OCI-LY7 (cell line): ENCODE measurements at regions of chr4 and their contacts with region 1.

Region 1: DNA sequence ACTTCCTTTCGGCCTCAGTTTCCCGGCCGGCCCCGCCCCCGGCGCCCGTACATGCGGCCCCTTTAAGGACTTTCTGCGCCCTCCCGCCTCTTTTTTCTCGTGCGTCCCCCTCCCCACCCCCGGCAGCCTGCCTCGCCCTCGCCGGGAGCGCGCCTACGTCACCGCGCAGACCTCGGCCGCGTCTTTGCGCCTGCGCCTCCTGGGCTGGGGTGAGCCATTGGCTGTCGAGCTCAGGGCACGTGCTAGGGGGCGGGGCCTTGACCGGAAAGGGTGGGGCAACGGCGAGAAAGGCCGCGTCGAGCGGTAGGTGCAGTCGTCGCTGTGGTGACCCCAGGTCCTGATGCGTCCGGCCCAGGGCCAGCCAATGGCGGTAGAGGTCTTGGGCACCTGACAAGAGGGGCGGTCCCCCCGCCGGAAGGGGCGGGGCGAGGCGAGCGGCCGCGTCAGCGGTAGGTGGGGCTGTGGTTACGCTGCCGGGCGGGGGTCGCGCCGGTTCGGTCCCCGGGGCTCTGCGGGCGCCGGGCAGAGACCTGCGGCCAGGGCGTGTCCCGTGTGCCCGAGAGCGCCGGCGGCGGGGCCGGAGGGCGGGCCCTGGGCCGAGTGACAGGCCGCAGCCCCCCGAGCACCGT is at the start of gene UVSSA:
- DNase-seq: peak; percentile 99
- H3K4me3 ChIP-seq: peak within 1 kb of the TSS; percentile 97
- H3K27ac ChIP-seq: peak within 1 kb of the TSS; percentile 61
- H3K4me1 ChIP-seq: peaks cover 29% of the 10 kb centered on the region
- CTCF ChIP-seq: no peak
- total RNA-seq, gene UVSSA: 13.2 and 17.9 TPM in 2 replicates

Region 2: DNA sequence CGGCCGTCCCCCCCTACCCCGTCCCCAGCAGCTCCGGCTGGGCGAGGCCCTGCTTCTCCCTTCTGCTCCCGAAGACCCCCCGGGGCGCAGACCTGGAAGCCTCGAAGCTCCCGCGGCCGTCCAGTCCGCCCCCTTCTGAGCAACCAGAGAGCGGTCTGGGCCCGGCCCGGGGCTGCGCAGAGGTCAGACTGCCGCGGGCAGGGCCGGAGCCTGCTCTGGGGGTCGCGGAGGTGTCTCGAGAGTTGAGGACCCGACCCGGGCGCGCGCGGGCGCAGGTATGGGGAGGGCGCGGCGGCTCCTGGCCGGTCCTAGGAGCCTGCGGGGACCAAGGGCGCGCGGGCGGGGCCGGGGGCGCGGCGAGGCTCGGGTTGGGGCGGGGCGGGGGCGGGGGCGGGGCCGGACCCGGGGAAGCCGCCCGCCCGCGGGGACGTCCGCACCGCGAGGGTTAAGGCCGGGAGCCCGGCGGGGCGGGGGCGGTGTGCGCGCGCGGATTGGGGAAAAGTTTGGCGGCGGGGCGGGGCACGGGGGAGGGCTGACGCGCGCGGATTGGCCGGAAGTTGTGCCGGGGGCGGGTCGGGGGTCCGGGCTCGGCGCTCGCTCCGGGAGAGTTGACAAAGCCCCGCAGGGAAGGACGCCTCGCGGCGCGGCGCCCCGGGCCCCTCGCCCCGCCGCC is 335.7 kb before region 1 on chr4 and contains the start of gene FGFRL1:
- CTCF ChIA-PET with region 1: no interaction called
- POLR2A ChIA-PET with region 1: no interaction called
- intact Hi-C with region 1: loop called (anchors 5 kb)
- DNase-seq: peak; percentile 85
- H3K4me3 ChIP-seq: peak within 1 kb of the TSS; percentile 64
- H3K27ac ChIP-seq: no peak within 1 kb of the TSS
- H3K4me1 ChIP-seq: peaks cover 29% of the 10 kb centered on the region
- CTCF ChIP-seq: no peak
- total RNA-seq, gene FGFRL1: 1.4 and 1.8 TPM in 2 replicates

Region 3: DNA sequence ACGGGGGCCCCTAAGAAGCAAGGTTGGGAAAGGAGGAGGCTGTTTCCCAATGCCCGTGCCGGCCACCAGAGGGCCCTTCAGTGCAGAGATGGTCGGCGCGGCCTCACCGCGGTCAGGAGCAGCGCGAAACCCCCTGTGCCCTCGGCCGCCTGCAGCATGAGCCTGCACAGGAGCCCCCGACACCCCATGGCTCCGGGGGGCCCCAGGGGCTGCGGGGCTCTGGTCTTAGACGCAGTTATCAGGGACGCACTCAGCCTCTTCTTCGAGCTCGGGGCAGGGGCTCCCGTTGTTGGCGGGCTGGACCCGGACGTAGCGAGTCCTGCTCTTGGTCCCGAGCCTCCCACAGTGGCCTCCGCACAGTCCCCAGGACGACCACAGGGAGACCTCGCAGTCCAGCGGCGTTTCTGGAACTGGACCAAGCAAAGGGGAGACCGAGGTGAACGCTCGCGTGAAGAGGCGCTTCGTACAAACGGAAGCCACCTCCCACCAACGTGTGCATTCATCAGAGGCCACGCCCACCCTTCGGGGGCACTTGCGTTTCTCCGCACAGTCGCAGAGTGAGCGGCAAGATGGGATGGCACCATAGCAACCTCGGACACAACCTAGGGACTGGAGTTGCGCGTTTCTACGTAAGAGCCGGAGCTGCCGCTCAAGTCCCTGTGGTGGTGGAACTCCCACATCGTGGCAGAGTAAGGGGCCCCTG is 179.5 kb before region 1 on chr4:
- CTCF ChIA-PET with region 1: no interaction called
- POLR2A ChIA-PET with region 1: no interaction called
- intact Hi-C with region 1: loop called (anchors 1 kb)
- DNase-seq: peak; percentile 97
- H3K4me3 ChIP-seq: peak overlapping the region; percentile 75
- H3K27ac ChIP-seq: peak overlapping the region; percentile 54
- H3K4me1 ChIP-seq: peaks cover 18% of the 10 kb centered on the region
- CTCF ChIP-seq: peak; percentile 92

Region 4: DNA sequence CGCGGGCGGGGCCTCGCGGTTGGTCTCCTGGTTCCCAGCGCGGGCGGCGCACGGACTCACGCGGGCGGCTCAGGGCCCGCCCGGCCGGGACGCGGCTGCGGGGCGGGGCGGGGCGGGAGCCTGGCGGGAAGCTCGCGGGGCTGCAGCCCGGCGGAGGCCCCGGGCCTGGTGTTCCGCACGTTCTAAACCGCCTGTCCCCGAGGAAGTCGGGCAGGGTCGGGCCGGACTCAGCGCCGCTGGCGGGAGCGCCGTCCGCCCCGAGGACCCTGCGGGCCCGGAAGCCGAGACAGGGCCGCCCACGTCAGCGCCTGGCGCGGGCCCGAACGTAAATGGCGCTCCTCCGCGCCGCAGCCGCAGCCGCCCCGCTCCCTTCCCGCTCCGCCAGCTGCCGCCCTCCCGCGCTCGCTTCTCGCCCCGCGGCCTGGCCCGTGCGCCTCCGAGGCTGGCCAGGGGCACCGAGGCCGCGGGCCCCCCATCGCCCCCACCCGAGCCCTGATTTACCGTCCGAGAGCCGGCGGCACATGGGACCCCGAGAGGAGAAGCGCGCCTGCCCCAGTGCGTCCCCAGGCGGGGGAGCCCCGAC is 97.7 kb before region 1 on chr4:
- CTCF ChIA-PET with region 1: no interaction called
- POLR2A ChIA-PET with region 1: interaction called, 4 read pairs
- intact Hi-C with region 1: loop called (anchors 1 kb)
- DNase-seq: peak; percentile 93
- H3K4me3 ChIP-seq: peak overlapping the region; percentile 76
- H3K27ac ChIP-seq: peak overlapping the region; percentile 76
- H3K4me1 ChIP-seq: peaks cover 28% of the 10 kb centered on the region
- CTCF ChIP-seq: no peak

Region 5: GRCh38 chr4:1289207-1290164 is 57.4 kb before region 1 on chr4 and contains the start of gene MAEA:
- CTCF ChIA-PET with region 1: no interaction called
- POLR2A ChIA-PET with region 1: interaction called, 10 read pairs
- intact Hi-C with region 1: loop called (anchors 2 kb)
- DNase-seq: peak; percentile 98
- H3K4me3 ChIP-seq: peak within 1 kb of the TSS; percentile 93
- H3K27ac ChIP-seq: peak within 1 kb of the TSS; percentile 52
- H3K4me1 ChIP-seq: peaks cover 34% of the 10 kb centered on the region
- CTCF ChIP-seq: no peak
- total RNA-seq, gene MAEA: 52.5 and 53.2 TPM in 2 replicates